A673 (cell line): ENCODE measurements at regions of chr10 and their contacts with region 1.

Region 1: DNA sequence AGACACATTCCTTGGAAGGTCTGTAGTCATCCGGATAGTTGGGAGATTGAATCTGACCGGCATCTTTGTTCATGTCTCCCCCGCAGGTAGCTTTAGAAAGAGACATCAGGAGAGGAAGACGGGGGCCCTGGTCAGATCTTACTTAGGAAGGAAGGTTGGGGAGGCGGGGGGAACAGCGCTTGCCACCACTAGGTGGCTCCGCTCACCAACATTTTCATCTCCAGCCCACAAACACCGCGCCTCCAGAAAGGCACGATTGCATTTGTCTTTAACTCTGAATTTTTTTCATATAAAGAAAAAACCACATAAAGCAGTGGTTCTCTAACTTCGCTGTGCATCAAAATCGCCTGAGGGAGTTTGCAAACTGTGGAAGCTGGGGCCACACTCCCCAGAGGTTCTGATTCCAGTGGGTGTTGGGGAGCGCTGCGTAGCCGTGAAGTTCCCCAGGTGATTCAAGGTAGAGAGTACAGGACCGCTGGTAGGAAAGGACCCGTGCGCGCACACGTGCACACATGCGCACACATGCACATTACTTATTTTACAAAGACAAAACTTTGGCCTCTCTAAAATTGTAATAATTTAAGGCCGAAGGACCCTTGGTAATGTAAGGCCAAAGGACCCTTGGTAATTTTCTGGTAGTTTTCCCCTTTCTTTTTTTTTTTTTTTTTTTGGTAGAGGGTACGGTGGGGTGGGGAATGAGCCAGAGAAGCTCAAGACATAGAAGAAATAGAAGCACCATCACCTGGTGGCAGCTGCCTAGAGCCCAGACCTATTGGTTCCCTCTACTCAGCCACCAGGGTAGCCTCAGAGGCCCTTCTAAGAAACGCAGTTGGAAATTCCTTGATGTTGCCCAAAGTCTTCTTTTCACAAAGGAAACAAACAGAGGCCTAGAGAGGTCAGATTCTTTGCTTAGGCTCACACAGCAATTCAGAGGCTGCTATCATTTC is 37.4 kb upstream of the OPALIN start:
- DNase-seq: peak; percentile 75
- H3K4me3 ChIP-seq: no peak overlapping the region
- H3K27ac ChIP-seq: no peak overlapping the region
- H3K4me1 ChIP-seq: peaks cover 9% of the 10 kb centered on the region
- H3K27me3 ChIP-seq: peaks cover 28% of the 10 kb centered on the region
- CTCF ChIP-seq: peak; percentile 91

Region 2: GRCh38 chr10:96017191-96017687 is 379.0 kb before region 1 on chr10:
- CTCF ChIA-PET with region 1: no interaction called
- POLR2A ChIA-PET with region 1: no interaction called
- intact Hi-C with region 1: no loop called
- DNase-seq: peak; percentile 58
- H3K4me3 ChIP-seq: no peak overlapping the region
- H3K27ac ChIP-seq: no peak overlapping the region
- H3K4me1 ChIP-seq: no peaks in the 10 kb centered on the region
- H3K27me3 ChIP-seq: no peaks in the 10 kb centered on the region
- CTCF ChIP-seq: peak; percentile 80

Region 3: DNA sequence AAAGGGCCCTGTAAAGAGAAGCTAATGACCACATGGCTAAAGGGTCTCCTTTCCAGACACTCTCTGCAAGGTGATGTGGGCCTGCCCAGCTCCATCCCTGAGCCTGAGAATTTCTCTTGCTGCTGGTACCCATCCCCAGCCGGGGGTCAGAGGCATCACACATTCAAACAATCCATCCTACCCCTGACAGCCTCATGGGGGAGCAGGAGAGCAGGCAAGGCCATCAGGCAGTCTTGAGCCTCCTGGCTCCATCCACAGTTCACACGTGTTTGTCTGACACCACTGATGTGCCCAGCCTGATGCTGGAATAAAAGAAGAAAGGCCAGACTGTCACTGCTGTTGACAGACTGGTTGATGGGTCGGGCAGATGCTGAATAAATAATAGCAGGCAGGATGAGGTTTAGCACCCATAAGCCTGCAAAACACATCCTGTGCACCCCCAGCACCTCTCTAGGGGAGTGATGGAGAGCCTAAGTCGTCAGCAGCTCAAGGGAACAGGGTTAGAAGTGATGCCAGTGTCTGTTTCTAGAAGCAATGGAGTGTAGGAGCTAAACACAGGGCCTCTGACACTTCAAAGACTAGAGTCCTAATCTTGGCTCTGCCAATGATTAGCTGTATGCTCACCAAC is 74.0 kb after region 1 on chr10:
- CTCF ChIA-PET with region 1: no interaction called
- POLR2A ChIA-PET with region 1: no interaction called
- intact Hi-C with region 1: loop called (anchors 5 kb)
- DNase-seq: peak; percentile 63
- H3K4me3 ChIP-seq: no peak overlapping the region
- H3K27ac ChIP-seq: no peak overlapping the region
- H3K4me1 ChIP-seq: peaks cover 6% of the 10 kb centered on the region
- H3K27me3 ChIP-seq: peaks cover 4% of the 10 kb centered on the region
- CTCF ChIP-seq: peak; percentile 68

Region 4: GRCh38 chr10:96511044-96511945 is 115.1 kb after region 1 on chr10:
- CTCF ChIA-PET with region 1: interaction called, 3 read pairs
- POLR2A ChIA-PET with region 1: no interaction called
- intact Hi-C with region 1: loop called (anchors 2 kb)
- DNase-seq: peak; percentile 33
- H3K4me3 ChIP-seq: no peak overlapping the region
- H3K27ac ChIP-seq: no peak overlapping the region
- H3K4me1 ChIP-seq: peaks cover 6% of the 10 kb centered on the region
- H3K27me3 ChIP-seq: peaks cover 23% of the 10 kb centered on the region
- CTCF ChIP-seq: peak; percentile 69

Region 5: GRCh38 chr10:96556003-96556402 is 159.8 kb after region 1 on chr10:
- CTCF ChIA-PET with region 1: no interaction called
- POLR2A ChIA-PET with region 1: no interaction called
- intact Hi-C with region 1: loop called (anchors 2 kb)
- DNase-seq: peak; percentile 33
- H3K4me3 ChIP-seq: no peak overlapping the region
- H3K27ac ChIP-seq: no peak overlapping the region
- H3K4me1 ChIP-seq: no peaks in the 10 kb centered on the region
- H3K27me3 ChIP-seq: no peaks in the 10 kb centered on the region
- CTCF ChIP-seq: peak; percentile 67

Region 6: DNA sequence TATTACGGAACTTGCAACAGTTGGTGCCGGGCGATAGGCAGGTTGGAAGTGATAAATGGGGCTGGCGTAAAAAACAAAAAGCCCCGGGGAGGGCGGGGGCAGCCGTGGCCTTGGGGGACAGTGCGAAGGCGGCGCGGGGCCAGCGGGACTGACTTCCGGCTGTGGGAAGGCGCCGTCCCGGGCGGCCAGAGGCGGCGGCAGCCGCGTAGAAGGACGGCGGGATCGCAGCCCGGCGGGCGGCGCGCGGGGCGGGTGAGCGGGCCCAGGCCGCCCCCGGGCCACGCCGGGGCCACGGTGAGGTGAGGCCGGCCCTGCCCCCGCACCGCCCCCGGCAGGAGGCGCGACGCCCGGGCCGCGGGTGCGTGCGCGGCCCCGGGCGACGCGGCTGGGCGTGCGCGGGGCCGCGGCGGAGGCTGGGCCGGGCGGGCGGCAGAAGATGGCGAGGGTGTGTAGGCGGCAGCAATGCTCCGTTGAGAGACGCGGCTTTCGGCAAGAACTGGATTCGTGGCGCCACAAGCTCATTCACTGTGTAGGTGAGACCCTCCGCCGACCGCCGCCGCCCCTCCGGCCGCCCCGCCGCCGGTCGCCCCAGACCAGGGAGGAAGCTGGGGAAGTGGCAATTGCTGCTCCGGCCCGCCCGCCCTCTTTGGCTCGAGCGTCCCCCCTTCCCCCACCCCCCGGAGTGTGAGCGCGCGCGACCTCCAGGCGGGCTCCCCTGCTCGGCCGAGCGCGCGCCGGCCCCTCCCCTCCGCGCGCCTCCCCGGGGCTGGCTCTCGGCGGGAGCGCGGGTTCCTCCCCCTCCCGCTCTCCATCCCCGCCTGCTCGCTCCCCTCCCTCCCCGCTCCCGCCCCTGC is 435.9 kb after region 1 on chr10 and contains the start of gene LCOR:
- CTCF ChIA-PET with region 1: no interaction called
- POLR2A ChIA-PET with region 1: no interaction called
- intact Hi-C with region 1: loop called (anchors 1 kb)
- DNase-seq: peak; percentile 94
- H3K4me3 ChIP-seq: peak within 1 kb of the TSS; percentile 90
- H3K27ac ChIP-seq: peak within 1 kb of the TSS; percentile 91
- H3K4me1 ChIP-seq: peaks cover 16% of the 10 kb centered on the region
- H3K27me3 ChIP-seq: no peaks in the 10 kb centered on the region
- CTCF ChIP-seq: no peak
- total RNA-seq, gene LCOR: 39.2 and 42.6 TPM in 2 replicates